ENCODE measurements at regions of chr14 and their contacts with region 1.

Region 1: GRCh38 chr14:61252369-61253063 is 28.6 kb downstream of the TMEM30B start:
- DNase-seq: peak; percentile 79
- ATAC-seq: peak; percentile 91
- H3K4me3 Mint-ChIP-seq: no peak overlapping the region
- H3K27ac Mint-ChIP-seq: no peak overlapping the region
- H3K4me1 Mint-ChIP-seq: peaks cover 5% of the 10 kb centered on the region
- H3K27me3 Mint-ChIP-seq: peaks cover 18% of the 10 kb centered on the region

Region 2: DNA sequence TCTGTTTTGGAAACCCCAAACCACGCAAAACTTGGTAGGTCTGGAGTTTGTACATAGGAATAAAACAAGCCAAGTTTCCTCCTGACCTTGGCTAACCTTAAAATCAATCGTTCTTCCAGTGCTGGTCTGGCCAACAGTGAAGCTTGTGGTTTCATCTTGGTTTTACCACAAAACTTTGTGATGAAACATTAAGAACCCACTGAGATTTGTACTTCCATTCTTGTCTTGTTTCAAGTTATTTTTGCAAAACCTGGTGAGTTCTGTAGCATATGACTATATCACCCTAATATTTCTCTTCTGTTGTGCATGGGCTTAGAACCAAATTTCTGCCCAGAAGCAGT is 629.6 kb before region 1 on chr14:
- CTCF ChIA-PET with region 1: interaction called, 33 read pairs
- POLR2A ChIA-PET with region 1: no interaction called
- intact Hi-C with region 1: loop called (anchors 1 kb)
- DNase-seq: no peak
- ATAC-seq: no peak
- H3K4me3 Mint-ChIP-seq: no peak overlapping the region
- H3K27ac Mint-ChIP-seq: no peak overlapping the region
- H3K4me1 Mint-ChIP-seq: no peaks in the 10 kb centered on the region
- H3K27me3 Mint-ChIP-seq: peaks cover 18% of the 10 kb centered on the region

Region 3: DNA sequence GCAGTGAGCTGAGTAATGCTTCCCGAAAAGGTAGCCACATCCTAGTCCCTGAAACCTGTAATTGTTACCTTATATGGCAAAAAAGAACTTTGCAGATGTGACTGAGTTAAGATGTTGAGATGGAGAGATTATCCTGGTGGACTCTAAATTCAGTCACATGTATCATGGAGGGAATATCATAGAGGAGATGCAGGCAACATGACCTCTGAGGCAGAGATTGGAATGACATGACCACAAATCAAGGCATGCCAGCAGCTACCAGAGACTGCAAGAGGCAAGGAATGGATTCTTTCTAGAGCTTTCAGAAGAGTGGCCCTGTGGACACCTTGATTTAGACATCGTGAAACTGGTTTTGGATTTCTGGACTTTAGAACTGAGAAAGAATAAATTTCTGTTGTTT is 253.0 kb before region 1 on chr14:
- CTCF ChIA-PET with region 1: no interaction called
- POLR2A ChIA-PET with region 1: no interaction called
- intact Hi-C with region 1: no loop called
- DNase-seq: no peak
- ATAC-seq: no peak
- H3K4me3 Mint-ChIP-seq: no peak overlapping the region
- H3K27ac Mint-ChIP-seq: no peak overlapping the region
- H3K4me1 Mint-ChIP-seq: no peaks in the 10 kb centered on the region
- H3K27me3 Mint-ChIP-seq: no peaks in the 10 kb centered on the region

Region 4: DNA sequence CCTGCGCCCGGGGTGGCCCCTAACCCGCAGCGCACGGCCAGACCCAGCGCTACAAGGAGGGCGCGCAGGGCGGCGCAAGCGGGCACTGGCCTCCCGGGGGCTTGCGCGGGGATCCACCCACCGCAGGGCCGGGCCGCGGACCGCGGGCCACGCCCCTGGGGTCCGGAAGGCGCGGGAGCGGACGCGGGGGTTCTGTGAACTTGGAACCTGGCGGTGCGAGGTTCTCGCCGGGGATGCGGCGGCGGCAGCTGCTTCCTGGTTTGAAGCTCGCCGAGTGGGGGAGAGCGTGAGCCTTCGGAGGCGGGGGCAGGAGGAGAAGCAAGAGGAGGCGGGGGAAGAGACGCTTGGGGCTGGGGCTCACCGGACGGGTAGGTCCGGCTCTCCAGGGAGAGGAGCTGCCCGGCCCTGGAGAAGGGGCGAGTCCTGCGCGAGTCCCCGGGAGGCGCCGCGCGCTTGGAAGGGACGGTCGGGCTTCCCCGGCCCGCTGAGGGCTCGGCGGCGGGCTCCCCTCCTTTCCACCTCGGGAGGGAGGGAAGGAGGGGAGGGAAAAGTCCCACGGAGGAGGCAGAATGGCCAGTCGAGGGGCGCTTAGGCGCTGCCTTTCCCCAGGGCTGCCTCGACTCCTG is 69.0 kb after region 1 on chr14 and contains the start of gene PRKCH:
- CTCF ChIA-PET with region 1: no interaction called
- POLR2A ChIA-PET with region 1: no interaction called
- intact Hi-C with region 1: no loop called
- DNase-seq: peak; percentile 90
- ATAC-seq: peak; percentile 63
- H3K4me3 Mint-ChIP-seq: peak within 1 kb of the TSS; percentile 92
- H3K27ac Mint-ChIP-seq: peak within 1 kb of the TSS; percentile 94
- H3K4me1 Mint-ChIP-seq: peaks cover 26% of the 10 kb centered on the region
- H3K27me3 Mint-ChIP-seq: no peaks in the 10 kb centered on the region
- total RNA-seq, gene PRKCH: 109 to 145 TPM

Region 5: DNA sequence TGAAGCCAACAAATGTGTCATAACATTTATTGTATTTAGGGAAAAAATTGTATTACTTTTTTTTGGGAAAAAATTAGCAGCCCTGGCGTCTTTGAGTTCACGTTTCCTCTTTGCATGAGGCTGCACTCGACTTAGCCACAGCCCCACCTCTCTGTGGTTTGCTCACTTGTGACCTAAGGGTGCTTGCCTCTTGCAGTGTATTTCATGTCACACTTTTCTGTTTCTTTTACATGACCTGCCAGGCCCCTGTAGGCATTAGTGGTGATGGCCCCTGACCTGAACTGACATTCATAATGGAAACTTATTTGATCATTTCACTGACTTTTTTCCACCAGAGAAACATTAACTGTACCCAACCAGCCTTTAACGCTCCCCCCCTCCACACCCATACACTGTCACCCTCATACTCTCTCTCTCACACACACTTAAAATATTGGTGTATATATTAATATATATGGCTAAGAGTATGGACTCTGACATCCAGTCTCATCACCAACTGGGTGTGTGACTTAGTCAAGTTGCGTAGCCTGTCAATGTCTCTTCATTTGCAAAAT is 191.8 kb after region 1 on chr14:
- CTCF ChIA-PET with region 1: no interaction called
- POLR2A ChIA-PET with region 1: no interaction called
- intact Hi-C with region 1: no loop called
- DNase-seq: peak; percentile 85
- ATAC-seq: peak; percentile 90
- H3K4me3 Mint-ChIP-seq: peak overlapping the region; percentile 46
- H3K27ac Mint-ChIP-seq: peak overlapping the region; percentile 90
- H3K4me1 Mint-ChIP-seq: peaks cover 96% of the 10 kb centered on the region
- H3K27me3 Mint-ChIP-seq: no peaks in the 10 kb centered on the region